ENCODE measurements at regions of chr9 and their contacts with region 1.

Region 1: DNA sequence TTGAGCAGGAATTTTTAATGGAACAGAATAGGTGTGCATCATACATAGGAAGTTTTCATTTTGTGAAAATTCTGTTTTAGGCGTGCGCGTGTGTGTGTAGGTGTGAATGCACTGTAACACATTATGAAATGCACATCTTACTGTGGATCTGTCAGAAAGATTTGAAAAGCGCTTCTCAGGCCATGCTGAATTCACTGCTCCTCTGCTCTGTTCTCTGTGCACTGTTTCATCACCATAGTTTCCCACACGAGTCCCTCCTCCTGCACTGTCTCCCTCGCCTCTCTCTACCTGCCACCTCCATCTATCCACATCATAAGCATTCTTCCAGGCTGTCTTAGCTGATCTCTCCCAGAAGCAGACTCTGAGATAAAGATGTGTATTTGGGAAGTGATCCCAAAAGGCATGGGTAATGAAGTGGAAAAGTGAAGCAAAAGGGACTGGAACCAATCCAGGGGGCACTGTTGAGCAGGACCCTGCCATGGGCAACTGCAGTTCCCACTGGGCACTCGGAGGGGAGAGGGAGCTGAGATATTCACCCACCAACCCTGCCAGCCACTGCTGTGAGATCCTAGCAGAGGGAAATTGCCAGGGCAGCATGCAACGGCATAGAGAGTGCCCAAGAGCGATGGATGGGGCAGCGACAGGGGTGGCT is 65.9 kb downstream of the GABBR2 start:
- H3K4me3 ChIP-seq: no peak overlapping the region
- H3K27ac ChIP-seq: no peak overlapping the region
- H3K4me1 ChIP-seq: no peaks in the 10 kb centered on the region
- CTCF ChIP-seq: no peak

Region 2: GRCh38 chr9:98132806-98133631 is 509.8 kb before region 1 on chr9:
- CTCF ChIA-PET with region 1: no interaction called
- POLR2A ChIA-PET with region 1: no interaction called
- H3K4me3 ChIP-seq: no peak overlapping the region
- H3K27ac ChIP-seq: no peak overlapping the region
- H3K4me1 ChIP-seq: no peaks in the 10 kb centered on the region
- CTCF ChIP-seq: no peak

Region 3: GRCh38 chr9:98619788-98620187 is 23.0 kb before region 1 on chr9:
- CTCF ChIA-PET with region 1: interaction called, 11 read pairs
- POLR2A ChIA-PET with region 1: no interaction called
- H3K4me3 ChIP-seq: no peak overlapping the region
- H3K27ac ChIP-seq: no peak overlapping the region
- H3K4me1 ChIP-seq: no peaks in the 10 kb centered on the region
- CTCF ChIP-seq: no peak

Measured in HEK293 (cell line).